Lower lobe of right lung (tissue), 2 donors: ENCODE measurements at regions of chr7 and their contacts with region 1.

Region 1: GRCh38 chr7:134432296-134433152 is 26.4 kb downstream of the AKR1B1 start:
- DNase-seq: peak; percentile 87
- ATAC-seq: peak; percentile 97 to 98
- H3K4me3 ChIP-seq: peak overlapping the region; percentile 47
- H3K27ac ChIP-seq: peak overlapping the region; percentile 80
- H3K4me1 ChIP-seq: peaks cover 4% of the 10 kb centered on the region
- H3K27me3 ChIP-seq: no peaks in the 10 kb centered on the region
- CTCF ChIP-seq: peak; percentile 74

Region 2: GRCh38 chr7:134605973-134606923 is 173.7 kb after region 1 on chr7:
- intact Hi-C with region 1: loop called (anchors 10 kb)
- DNase-seq: peak; percentile 52
- ATAC-seq: peak; percentile 91
- H3K4me3 ChIP-seq: no peak overlapping the region
- H3K27ac ChIP-seq: peak overlapping the region; percentile 10
- H3K4me1 ChIP-seq: peaks cover 13% of the 10 kb centered on the region
- H3K27me3 ChIP-seq: no peaks in the 10 kb centered on the region
- CTCF ChIP-seq: peak; percentile 92